Esophagus muscularis mucosa (tissue), 4 donors: ENCODE measurements at regions of chr3 and their contacts with region 1.

Region 1: DNA sequence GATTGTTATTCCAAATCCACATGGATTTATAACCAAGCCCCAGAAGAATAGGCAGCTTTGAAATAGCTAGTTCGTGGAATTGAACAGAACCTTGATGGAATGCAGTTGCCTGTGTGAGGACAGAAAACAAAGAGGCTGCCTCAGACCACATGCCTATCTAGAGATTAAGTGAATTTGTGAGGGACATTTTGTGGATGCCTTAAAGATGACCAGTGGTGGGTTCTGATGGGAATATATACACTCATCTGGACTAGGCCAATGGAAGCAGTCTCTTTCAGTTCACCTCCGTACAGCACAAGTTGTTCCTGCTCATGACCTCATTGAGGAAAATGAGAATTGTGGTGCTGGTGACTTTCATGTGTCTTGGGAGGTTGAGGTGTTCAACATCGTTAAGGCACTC is 63.2 kb upstream of the PYDC2 start:
- DNase-seq: no peak
- H3K4me3 ChIP-seq: no peak overlapping the region
- H3K27ac ChIP-seq: no peak overlapping the region
- H3K4me1 ChIP-seq: peaks cover 0 to 12% (median 8%) of the 10 kb centered on the region in 4 donors
- H3K27me3 ChIP-seq: no peaks in the 10 kb centered on the region
- CTCF ChIP-seq: no peak
- EP300 ChIP-seq: no peak
- POLR2A ChIP-seq: no peak

Region 2: DNA sequence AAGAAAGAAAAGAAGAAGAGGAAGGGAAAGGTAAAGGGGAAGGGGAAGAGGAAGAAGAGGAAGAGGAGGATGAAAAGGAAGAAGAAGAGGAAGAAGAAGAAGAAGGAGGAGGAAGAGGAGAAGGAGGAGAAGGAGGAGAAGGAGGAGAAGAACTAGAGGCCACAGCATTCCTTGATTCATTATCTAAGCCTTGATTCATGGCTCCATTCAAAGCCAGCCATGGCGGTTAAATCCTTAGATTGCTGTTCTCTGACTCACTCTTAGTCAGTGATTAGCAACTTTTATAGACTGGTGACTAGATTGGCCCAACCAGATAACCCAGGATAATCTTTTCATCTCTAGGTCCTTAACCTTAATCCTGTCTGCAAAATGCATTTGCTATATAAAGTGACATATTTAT is 151.1 kb before region 1 on chr3:
- intact Hi-C with region 1: loop called (anchors 5 kb)
- DNase-seq: no peak
- H3K4me3 ChIP-seq: no peak overlapping the region
- H3K27ac ChIP-seq: no peak overlapping the region
- H3K4me1 ChIP-seq: no peaks in the 10 kb centered on the region
- H3K27me3 ChIP-seq: no peaks in the 10 kb centered on the region
- CTCF ChIP-seq: no peak
- EP300 ChIP-seq: no peak
- POLR2A ChIP-seq: no peak

Region 3: DNA sequence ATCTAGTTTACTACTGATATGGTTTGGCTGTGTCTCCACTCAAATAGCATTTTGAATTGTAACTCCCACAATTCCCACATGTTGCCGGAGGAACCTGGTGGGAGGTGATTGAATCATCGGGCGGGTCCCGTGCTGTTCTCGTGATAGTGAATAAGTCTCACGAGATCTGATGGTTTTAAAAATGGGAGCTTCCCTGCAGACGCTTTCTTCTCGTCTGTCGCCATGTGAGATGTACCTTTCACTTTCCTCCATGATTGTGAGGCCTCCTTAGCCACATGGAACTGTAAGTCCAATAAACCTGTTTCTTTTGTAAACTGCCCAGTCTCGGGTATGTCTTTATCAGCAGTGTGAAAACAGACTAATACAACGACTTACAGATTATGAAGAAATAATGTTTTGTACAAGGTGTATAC is 27.6 kb after region 1 on chr3:
- intact Hi-C with region 1: no loop called
- DNase-seq: no peak
- H3K4me3 ChIP-seq: no peak overlapping the region
- H3K27ac ChIP-seq: no peak overlapping the region
- H3K4me1 ChIP-seq: no peaks in the 10 kb centered on the region
- H3K27me3 ChIP-seq: no peaks in the 10 kb centered on the region
- CTCF ChIP-seq: no peak
- EP300 ChIP-seq: no peak
- POLR2A ChIP-seq: no peak